KBM-7 (cell line): ENCODE measurements at regions of chr5 and their contacts with region 1.

Region 1: GRCh38 chr5:159444441-159445082 is 114.3 kb upstream of the IL12B start:
- DNase-seq: peak; percentile 67

Region 2: DNA sequence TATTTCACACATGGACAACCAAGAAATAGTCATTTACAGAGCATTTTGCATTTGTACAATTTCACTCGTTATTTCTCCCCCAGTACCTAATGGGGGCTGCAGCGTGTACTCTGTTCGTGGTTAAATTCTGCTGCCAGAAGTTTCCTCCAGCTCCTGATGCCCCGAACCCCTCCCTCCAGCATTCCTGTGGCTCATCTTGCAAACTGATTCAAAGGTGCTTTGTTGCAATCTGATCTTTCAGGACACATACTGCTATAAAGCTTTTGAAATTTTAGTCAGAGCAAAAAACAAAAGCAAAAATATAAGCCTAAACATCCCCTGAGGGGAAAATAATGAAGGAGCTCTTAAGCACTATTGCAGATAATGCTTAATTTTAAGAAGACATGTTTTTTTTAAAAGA is 153.8 kb before region 1 on chr5:
- in situ Hi-C with region 1: no loop called
- DNase-seq: no peak

Region 3: GRCh38 chr5:160399402-160400353 is 955.1 kb after region 1 on chr5 and contains the start of gene FAM200C:
- in situ Hi-C with region 1: loop called (anchors 25 kb)
- DNase-seq: peak; percentile 90